ENCODE measurements at regions of chr3 and their contacts with region 1.

Region 1: DNA sequence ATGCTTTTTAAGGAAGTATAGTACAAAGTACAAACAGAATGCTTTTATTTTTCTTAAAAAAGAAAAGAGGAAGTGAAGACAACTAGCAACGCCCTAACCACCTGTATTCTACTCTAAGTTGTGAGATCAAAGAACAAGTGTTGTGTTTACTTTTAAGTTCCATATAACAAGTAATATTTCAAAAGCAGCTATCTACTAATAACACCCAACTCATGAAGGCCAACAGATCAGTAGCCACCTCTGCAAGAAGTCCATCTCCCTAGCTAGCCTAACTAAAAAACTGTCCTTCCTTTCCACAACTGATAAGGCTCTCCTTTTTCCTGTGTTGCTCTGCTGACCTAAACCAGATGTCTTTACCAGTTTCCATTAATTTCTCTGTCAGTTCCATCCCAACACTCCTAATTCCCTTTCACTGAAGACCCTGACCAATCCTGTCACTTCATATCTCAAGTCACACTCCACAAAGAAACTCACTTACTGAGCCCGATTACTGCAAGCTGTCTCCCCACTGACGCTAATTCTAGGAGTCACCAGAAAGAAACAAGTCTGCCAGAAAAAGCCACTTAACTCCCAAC is 26.9 kb downstream of the PHC3 start:
- DNase-seq: peak; percentile 56
- ATAC-seq: peak; percentile 95
- H3K4me3 ChIP-seq: peak overlapping the region; percentile 20; the same call in 1 of the 2 replicates
- H3K27ac ChIP-seq: peak overlapping the region; percentile 94
- H3K4me1 ChIP-seq: peaks cover 28% of the 10 kb centered on the region
- H3K27me3 ChIP-seq: no peaks in the 10 kb centered on the region
- CTCF ChIP-seq: no peak
- EP300 ChIP-seq: peak; percentile 63 to 84; a peak in 3 of 4 replicates
- POLR2A ChIP-seq: no peak
- RAD21 ChIP-seq: no peak

Region 2: DNA sequence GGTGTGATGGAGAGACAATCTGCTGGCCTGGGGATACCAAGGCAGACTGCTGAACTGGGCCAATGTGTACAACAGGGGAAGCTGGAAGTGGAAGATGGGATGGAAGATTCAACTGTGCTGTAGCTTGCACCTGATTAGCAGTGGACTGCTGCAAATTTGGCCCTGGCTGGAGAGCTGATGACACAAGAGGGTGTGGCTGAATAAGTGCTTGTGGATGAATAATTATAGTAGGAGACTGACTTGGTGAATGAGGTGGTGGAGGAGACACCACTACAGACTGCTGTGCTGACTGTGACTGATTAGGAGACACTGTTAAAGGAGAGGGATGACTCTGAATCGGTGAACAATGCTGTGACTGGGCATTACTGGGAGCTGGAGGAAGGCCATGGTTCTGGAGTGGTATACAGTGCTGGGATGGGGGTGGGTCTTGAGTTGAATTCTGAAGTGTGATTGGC is 25.7 kb before region 1 on chr3:
- CTCF ChIA-PET with region 1: no interaction called
- POLR2A ChIA-PET with region 1: interaction called, 12 read pairs
- RAD21 ChIA-PET with region 1: interaction called, 13 read pairs
- SMC1A ChIA-PET with region 1: interaction called, 12 read pairs
- in situ Hi-C with region 1: no loop called
- intact Hi-C with region 1: no loop called
- DNase-seq: no peak
- ATAC-seq: peak; percentile 74
- H3K4me3 ChIP-seq: no peak overlapping the region
- H3K27ac ChIP-seq: peak overlapping the region; percentile 94
- H3K4me1 ChIP-seq: peaks cover 27% of the 10 kb centered on the region
- H3K27me3 ChIP-seq: no peaks in the 10 kb centered on the region
- CTCF ChIP-seq: no peak
- EP300 ChIP-seq: no peak
- POLR2A ChIP-seq: peak; percentile 53; the same call in 1 of the 2 replicates
- RAD21 ChIP-seq: no peak

Region 3: GRCh38 chr3:170137986-170138385 is 16.7 kb before region 1 on chr3:
- CTCF ChIA-PET with region 1: interaction called, 3 read pairs
- POLR2A ChIA-PET with region 1: interaction called, 4 read pairs
- RAD21 ChIA-PET with region 1: interaction called, 4 read pairs
- SMC1A ChIA-PET with region 1: interaction called, 12 read pairs
- in situ Hi-C with region 1: no loop called
- intact Hi-C with region 1: no loop called
- DNase-seq: no peak
- ATAC-seq: no peak
- H3K4me3 ChIP-seq: no peak overlapping the region
- H3K27ac ChIP-seq: no peak overlapping the region
- H3K4me1 ChIP-seq: no peaks in the 10 kb centered on the region
- H3K27me3 ChIP-seq: no peaks in the 10 kb centered on the region
- CTCF ChIP-seq: no peak
- EP300 ChIP-seq: no peak
- POLR2A ChIP-seq: no peak
- RAD21 ChIP-seq: no peak

Region 4: GRCh38 chr3:170144437-170144843 is 10.2 kb before region 1 on chr3:
- CTCF ChIA-PET with region 1: interaction called, 12 read pairs
- POLR2A ChIA-PET with region 1: interaction called, 9 read pairs
- RAD21 ChIA-PET with region 1: interaction called, 9 read pairs
- SMC1A ChIA-PET with region 1: interaction called, 29 read pairs
- in situ Hi-C with region 1: no loop called
- intact Hi-C with region 1: no loop called
- DNase-seq: peak; percentile 65
- ATAC-seq: peak; percentile 97
- H3K4me3 ChIP-seq: no peak overlapping the region
- H3K27ac ChIP-seq: peak overlapping the region; percentile 67
- H3K4me1 ChIP-seq: peaks cover 13% of the 10 kb centered on the region
- H3K27me3 ChIP-seq: no peaks in the 10 kb centered on the region
- CTCF ChIP-seq: no peak
- EP300 ChIP-seq: peak in 1 of 2 experiments; percentile 54; a peak in 1 of 4 replicates
- POLR2A ChIP-seq: no peak
- RAD21 ChIP-seq: no peak

Region 5: GRCh38 chr3:170171563-170171962 is 16.9 kb after region 1 on chr3:
- CTCF ChIA-PET with region 1: interaction called, 14 read pairs
- POLR2A ChIA-PET with region 1: interaction called, 7 read pairs
- RAD21 ChIA-PET with region 1: interaction called, 49 read pairs
- SMC1A ChIA-PET with region 1: interaction called, 115 read pairs
- in situ Hi-C with region 1: no loop called
- intact Hi-C with region 1: no loop called
- DNase-seq: no peak
- ATAC-seq: peak; percentile 77
- H3K4me3 ChIP-seq: peak overlapping the region; percentile 11; the same call in 1 of the 2 replicates
- H3K27ac ChIP-seq: peak overlapping the region; percentile 71
- H3K4me1 ChIP-seq: peaks cover 13% of the 10 kb centered on the region
- H3K27me3 ChIP-seq: no peaks in the 10 kb centered on the region
- CTCF ChIP-seq: no peak
- EP300 ChIP-seq: no peak
- POLR2A ChIP-seq: no peak
- RAD21 ChIP-seq: no peak

Region 6: DNA sequence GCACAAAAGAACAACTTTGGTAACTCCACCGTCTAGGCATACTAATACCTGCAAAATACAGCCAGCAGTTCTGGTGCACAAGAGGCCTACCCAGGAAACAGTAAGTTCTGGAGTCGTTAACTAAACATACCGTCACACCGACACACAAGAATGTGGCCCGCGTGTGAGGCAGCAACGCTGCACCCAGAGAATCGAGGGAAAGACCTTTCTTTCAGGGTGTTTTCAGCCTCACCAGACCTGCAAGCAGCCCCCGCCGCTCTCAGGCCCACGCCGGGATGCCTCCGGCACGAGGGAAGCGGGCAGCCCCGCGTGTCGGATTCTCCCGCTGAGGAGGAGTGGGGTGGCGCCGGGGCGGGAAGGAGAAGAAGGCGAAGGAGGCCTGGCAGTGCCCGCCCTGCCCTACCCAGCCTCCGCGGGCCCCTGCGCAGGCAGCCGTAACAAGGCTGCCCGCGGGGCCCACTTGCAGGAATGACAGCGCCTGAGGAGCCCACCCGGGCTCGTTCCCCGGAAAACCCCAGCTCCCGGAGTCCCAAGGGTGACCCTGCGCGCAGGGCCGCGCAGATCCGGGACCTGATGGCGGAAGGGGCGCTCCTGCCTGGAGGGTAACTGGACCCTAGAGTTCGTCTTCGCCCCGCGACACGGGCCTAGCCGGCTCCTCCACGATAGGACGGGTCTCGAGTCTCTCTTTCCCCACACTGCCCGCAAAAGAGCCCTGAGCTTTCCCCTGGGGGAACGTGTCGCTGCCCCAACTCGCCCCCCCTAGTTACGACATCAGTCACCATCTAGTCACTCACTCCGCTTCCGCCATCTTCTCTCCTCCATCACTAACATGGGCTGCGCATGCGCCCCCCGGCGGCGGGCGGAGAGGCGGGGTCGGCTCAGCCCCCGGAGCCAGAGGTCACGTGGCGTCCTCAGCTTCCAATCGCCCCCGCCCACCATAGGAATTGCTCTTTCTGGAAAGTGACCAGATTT is 26.5 kb after region 1 on chr3 and contains the start of gene PHC3:
- CTCF ChIA-PET with region 1: interaction called, 5 read pairs
- POLR2A ChIA-PET with region 1: interaction called, 5 read pairs
- RAD21 ChIA-PET with region 1: interaction called, 11 read pairs
- SMC1A ChIA-PET with region 1: interaction called, 115 read pairs
- in situ Hi-C with region 1: no loop called
- intact Hi-C with region 1: no loop called
- DNase-seq: peak; percentile 73
- ATAC-seq: peak; percentile 80
- H3K4me3 ChIP-seq: peak within 1 kb of the TSS; percentile 89
- H3K27ac ChIP-seq: peak within 1 kb of the TSS; percentile 98
- H3K4me1 ChIP-seq: peaks cover 3% of the 10 kb centered on the region
- H3K27me3 ChIP-seq: no peaks in the 10 kb centered on the region
- CTCF ChIP-seq: 0 out of 6 replicates have a peak, but pooled peaks of 1 of the 3 experiments have one; percentile 17
- EP300 ChIP-seq: no peak
- POLR2A ChIP-seq: peak; percentile 79
- RAD21 ChIP-seq: no peak
- polyA plus RNA-seq, gene PHC3: 3.3 to 5.8 TPM